ENCODE measurements at regions of chrX and their contacts with region 1.

Region 1: DNA sequence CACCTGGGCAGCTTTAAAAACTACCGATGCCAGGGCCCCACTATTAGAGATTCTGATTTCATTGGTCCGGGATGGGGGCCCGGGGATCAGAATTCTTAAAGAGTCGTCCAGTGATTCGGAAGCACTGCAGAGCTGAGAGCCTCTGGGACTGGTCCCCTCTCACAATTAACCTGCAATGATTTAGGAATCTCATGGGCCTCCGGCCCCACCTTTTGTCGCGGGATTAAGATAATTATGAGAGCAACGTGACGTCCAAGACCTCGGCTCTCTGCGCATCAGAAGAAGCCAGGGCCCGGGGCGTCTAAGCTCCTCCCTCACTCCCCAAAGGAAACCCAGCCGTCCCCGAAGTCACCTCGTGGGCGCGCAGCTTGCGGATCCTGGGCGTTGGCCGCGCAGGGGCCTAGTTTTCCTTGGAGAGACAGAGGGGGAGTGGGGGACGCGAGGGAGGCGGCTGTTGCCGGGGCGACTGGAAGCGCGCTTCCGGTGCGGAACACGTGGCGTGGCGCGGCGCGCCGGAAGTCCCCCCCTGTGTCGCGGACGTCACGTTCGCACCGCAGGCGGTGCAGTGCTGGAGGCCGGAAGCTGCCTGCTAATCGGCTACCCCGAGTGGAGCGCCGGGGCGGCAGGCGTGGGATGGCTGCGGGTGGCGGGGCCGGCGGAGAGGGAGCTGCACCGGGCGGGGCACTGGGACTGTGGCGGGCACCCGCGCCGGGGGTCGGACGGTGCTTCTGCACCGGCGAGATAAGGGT is at the start of gene GEMIN8:
- DNase-seq: peak; percentile 71 to 92 (median 84)
- ATAC-seq: peak; percentile 94 to 97 (median 96)
- H3K4me3 ChIP-seq: peak within 1 kb of the TSS; percentile 86 to 88
- H3K4me3 Mint-ChIP-seq: peak within 1 kb of the TSS; percentile 88 to 96 (median 91)
- H3K27ac ChIP-seq: peak within 1 kb of the TSS; percentile 81
- H3K27ac Mint-ChIP-seq: peak within 1 kb of the TSS; percentile 94 to 99
- H3K4me1 ChIP-seq: peaks cover 11 to 21% of the 10 kb centered on the region in 2 experiments
- H3K4me1 Mint-ChIP-seq: peaks cover 39 to 52% (median 45%) of the 10 kb centered on the region in 3 donors
- H3K27me3 ChIP-seq: no peaks in the 10 kb centered on the region
- H3K27me3 Mint-ChIP-seq: peaks cover 2 to 9% of the 10 kb centered on the region in 2 donors
- total RNA-seq, gene GEMIN8: 11.3 to 16.4 (median 15.0) TPM

Region 2: DNA sequence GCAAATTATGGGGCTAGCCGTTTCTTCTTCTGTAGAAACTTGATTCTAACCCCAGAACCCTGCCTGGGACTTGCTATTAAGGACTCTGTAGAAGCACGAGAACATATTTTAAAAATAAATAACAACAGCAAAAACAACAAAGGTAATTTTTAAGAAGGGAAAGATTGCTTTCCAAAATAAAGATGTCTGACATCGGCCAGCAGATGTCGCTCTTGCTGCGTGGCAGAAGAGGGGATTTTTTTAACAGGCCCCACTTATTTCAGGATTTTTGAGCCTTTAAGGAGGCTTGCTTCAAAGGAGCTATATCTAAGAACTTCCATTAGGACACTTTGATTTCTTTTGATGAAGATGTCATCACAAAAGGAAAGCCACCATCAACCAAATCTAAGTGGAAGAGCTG is 523.0 kb before region 1 on chrX:
- CTCF ChIA-PET with region 1: interaction called, 15 to 20 read pairs
- POLR2A ChIA-PET with region 1: no interaction called
- DNase-seq: peak in 33 of 35 experiments; percentile 10 to 72 (median 27)
- ATAC-seq: no peak
- H3K4me3 ChIP-seq: no peak overlapping the region
- H3K4me3 Mint-ChIP-seq: no peak overlapping the region
- H3K27ac ChIP-seq: no peak overlapping the region
- H3K27ac Mint-ChIP-seq: no peak overlapping the region
- H3K4me1 ChIP-seq: no peaks in the 10 kb centered on the region
- H3K4me1 Mint-ChIP-seq: peaks cover 0 to 6% (median 0%) of the 10 kb centered on the region in 3 donors
- H3K27me3 ChIP-seq: no peaks in the 10 kb centered on the region
- H3K27me3 Mint-ChIP-seq: peaks cover 0 to 27% of the 10 kb centered on the region in 2 donors

Region 3: GRCh38 chrX:13646154-13646549 is 383.4 kb before region 1 on chrX:
- CTCF ChIA-PET with region 1: no interaction called
- POLR2A ChIA-PET with region 1: no interaction called
- DNase-seq: peak in 16 of 35 experiments; percentile 3 to 48 (median 21)
- ATAC-seq: peak in 2 of 4 experiments; percentile 36 to 52
- H3K4me3 ChIP-seq: no peak overlapping the region
- H3K4me3 Mint-ChIP-seq: no peak overlapping the region
- H3K27ac ChIP-seq: no peak overlapping the region
- H3K27ac Mint-ChIP-seq: no peak overlapping the region
- H3K4me1 ChIP-seq: no peaks in the 10 kb centered on the region
- H3K4me1 Mint-ChIP-seq: peaks cover 0 to 15% (median 8%) of the 10 kb centered on the region in 3 donors
- H3K27me3 ChIP-seq: no peaks in the 10 kb centered on the region
- H3K27me3 Mint-ChIP-seq: peaks cover 0 to 23% of the 10 kb centered on the region in 2 donors

Region 4: GRCh38 chrX:14309431-14309830 is 279.8 kb after region 1 on chrX:
- CTCF ChIA-PET with region 1: no interaction called
- POLR2A ChIA-PET with region 1: no interaction called
- DNase-seq: no peak
- ATAC-seq: no peak
- H3K4me3 ChIP-seq: no peak overlapping the region
- H3K4me3 Mint-ChIP-seq: no peak overlapping the region
- H3K27ac ChIP-seq: no peak overlapping the region
- H3K27ac Mint-ChIP-seq: no peak overlapping the region
- H3K4me1 ChIP-seq: no peaks in the 10 kb centered on the region
- H3K4me1 Mint-ChIP-seq: no peaks in the 10 kb centered on the region
- H3K27me3 ChIP-seq: no peaks in the 10 kb centered on the region
- H3K27me3 Mint-ChIP-seq: no peaks in the 10 kb centered on the region

Measured in T-cell (primary cell).